Posterior vena cava (tissue), 2 donors: ENCODE measurements at regions of chr2 and their contacts with region 1.

Region 1: DNA sequence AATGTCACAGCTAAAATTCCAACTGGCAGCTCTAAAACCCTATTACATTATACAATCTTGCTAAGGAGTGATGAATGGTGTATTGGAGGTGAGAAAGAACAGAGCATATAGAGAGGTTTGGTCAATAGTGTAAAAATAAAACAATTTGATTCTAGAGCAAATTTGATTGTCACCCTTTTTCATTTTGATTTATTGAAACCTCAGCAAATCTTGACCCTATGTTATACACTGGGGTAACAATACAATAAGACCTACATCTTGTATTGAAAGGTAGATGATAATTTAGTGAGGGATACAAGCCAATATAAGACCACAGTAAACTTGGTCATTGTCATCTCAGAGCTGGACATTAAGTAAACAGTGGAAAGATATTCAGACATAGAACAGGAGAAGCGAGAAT is 671.9 kb downstream of the IRS1 start:
- DNase-seq: no peak

Region 2: GRCh38 chr2:226048611-226049010 is 79.1 kb before region 1 on chr2:
- intact Hi-C with region 1: no loop called
- DNase-seq: no peak

Region 3: GRCh38 chr2:226151132-226151531 is 23.4 kb after region 1 on chr2:
- intact Hi-C with region 1: loop called in 1 of 2 experiments (anchors 2 kb)
- DNase-seq: no peak